ENCODE measurements at regions of chr6 and their contacts with region 1.

Region 1: DNA sequence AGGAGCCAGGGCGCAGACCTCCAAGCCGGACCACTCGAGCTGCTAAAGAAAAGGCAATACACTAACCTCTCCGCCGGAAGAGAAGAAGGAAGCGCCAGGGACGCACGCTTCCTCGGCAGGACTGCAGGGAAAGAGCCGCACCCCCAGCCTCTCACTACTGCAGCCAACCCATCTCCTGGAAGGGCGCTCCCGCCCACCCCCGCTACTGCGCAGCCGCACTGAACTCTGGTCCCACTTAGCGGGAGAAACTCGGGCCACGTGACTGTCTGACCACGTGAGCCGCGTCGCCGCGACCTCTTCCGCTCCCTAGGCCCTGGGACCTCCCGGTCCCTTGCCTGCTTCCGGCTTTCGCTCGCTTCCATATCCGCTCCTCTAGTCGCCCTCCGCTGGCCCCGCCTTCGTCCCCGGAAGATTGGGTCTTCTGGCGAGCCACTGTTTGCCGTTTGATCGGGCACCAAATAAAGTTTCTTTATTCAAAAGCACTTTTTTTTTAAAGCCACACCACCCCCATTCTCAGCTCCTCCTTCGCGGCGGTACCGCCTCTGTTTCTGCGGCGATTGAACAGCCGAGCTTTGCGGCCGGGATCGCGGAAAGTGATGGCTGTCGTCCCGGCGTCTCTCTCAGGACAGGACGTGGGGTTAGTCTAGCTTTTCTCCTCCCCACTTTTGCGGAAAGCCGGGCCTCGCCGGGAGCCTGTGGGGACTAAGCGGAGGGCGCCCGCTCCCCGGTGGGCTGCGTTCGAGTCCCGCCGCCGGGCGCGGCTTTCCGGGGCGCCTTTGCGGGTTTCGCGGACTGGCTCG is at the start of gene RMND1:
- DNase-seq: peak; percentile 96
- ATAC-seq: peak; percentile 96
- H3K4me3 Mint-ChIP-seq: peak within 1 kb of the TSS; percentile 97
- H3K27ac Mint-ChIP-seq: peak within 1 kb of the TSS; percentile 91
- H3K4me1 Mint-ChIP-seq: peaks cover 28% of the 10 kb centered on the region
- H3K27me3 Mint-ChIP-seq: no peaks in the 10 kb centered on the region
- CTCF ChIP-seq: no peak
- total RNA-seq, gene RMND1: 12.4 and 17.1 TPM in 2 replicates

Region 2: DNA sequence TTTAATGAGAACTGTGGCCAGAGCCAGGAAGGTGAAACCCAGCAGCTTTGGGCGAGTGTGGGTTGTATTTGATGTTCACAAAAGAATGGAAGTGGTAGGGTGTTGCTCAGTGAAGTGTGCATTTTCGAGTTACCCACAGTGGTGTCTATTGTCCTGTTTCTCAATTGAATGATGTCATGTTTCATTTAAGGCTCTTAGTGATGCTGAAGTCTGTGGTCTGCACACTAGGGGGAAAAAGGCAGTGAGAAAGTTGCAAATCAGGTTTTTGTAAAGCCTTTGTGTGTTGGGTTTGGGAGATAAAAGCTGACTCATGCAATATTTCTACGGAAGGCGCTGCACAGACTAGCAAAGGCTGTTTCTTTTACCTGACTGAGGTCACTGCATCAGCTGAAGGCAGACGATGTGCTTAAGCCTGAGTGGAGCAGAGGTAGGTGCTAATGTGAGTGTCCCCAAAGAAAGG is 731.3 kb before region 1 on chr6:
- CTCF ChIA-PET with region 1: no interaction called
- POLR2A ChIA-PET with region 1: interaction called, 10 read pairs
- intact Hi-C with region 1: no loop called
- DNase-seq: no peak
- ATAC-seq: peak; percentile 96
- H3K4me3 Mint-ChIP-seq: peak overlapping the region; percentile 25
- H3K27ac Mint-ChIP-seq: peak overlapping the region; percentile 80
- H3K4me1 Mint-ChIP-seq: peaks cover 74% of the 10 kb centered on the region
- H3K27me3 Mint-ChIP-seq: no peaks in the 10 kb centered on the region
- CTCF ChIP-seq: no peak

Region 3: DNA sequence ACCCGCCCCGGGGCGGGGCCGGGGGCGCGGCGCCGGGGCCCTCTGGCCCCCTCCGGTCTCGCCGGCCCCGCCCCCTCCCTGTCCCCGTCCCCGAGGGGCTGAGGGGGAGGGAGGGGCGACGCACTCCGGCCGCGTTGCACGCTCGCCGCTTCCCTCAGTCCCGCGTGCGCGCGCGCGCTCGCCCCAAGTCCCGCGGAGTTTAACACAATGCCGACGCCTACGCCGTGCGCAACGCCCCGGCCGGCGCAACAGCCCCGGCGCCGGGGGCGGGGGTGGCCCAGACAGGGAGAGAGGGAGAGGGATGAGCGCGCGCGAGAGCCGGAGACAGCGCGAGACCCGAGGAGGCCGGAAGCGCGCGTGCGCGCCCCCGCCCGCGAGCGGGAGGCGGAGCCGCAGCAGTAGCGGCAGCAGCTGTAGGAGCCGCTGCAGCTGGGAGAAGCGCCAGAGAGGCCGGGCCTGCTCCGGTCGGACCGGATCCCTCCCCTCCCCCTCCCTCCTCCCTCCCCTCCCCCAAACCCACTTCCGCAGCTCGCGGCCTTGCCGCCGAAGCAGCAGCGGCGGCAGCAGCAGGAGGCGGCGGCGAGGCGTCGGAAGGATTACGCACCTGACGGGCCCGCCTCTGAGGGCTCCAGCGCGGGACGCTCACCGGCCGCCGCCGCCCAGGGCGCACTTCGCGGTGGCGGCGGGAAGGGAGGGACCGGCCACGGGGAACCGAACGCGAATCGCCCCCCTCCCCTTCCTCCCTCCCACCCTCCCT is 61.7 kb before region 1 on chr6:
- CTCF ChIA-PET with region 1: no interaction called
- POLR2A ChIA-PET with region 1: interaction called, 38 read pairs
- intact Hi-C with region 1: loop called (anchors 1 kb)
- DNase-seq: peak; percentile 98
- ATAC-seq: peak; percentile 74
- H3K4me3 Mint-ChIP-seq: peak overlapping the region; percentile 91
- H3K27ac Mint-ChIP-seq: peak overlapping the region; percentile 75
- H3K4me1 Mint-ChIP-seq: peaks cover 53% of the 10 kb centered on the region
- H3K27me3 Mint-ChIP-seq: no peaks in the 10 kb centered on the region
- CTCF ChIP-seq: no peak

Region 4: DNA sequence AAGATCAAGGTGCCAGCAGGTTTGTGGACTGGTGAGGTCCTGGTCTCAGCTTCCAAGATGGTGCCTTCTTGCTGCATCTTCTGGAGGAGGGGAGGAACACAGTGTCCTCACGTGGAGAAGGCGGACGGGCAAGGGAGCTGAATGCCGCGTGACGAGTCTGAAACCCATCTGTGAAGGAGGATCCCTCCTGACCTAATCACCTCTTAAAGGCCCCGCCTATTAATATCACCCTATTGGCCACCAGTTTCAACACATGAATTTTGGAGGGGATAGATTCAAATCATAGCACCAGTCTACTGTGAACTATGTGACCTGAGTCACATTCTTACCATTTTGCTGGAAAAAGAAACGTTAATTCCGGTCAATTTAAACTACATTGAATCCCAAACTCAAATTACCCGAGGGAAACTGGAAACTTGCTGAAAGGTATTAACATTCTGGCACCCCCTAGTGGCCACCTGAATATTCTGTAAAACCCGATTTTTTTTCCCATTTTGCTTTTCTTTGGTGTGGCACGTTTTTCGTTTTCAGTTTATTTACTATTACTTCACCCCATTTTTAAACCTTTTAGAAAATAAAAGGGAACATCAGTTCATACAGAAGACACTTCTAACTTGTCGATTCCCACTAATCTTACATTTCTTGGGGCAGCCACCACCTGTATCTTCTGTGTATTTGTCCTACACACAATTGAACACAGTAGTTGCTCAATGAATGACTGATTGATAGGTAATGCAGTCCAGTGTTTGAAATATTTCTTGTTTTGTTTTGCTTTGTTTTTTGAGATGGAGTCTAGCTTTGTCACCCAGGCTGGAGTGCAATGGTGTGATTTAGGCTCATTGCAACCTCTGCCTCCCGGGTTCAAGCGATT is 23.7 kb after region 1 on chr6:
- CTCF ChIA-PET with region 1: interaction called, 5 read pairs
- POLR2A ChIA-PET with region 1: interaction called, 4 read pairs
- intact Hi-C with region 1: loop called (anchors 1 kb)
- DNase-seq: no peak
- ATAC-seq: peak; percentile 31
- H3K4me3 Mint-ChIP-seq: peak overlapping the region; percentile 44
- H3K27ac Mint-ChIP-seq: no peak overlapping the region
- H3K4me1 Mint-ChIP-seq: peaks cover 9% of the 10 kb centered on the region
- H3K27me3 Mint-ChIP-seq: no peaks in the 10 kb centered on the region
- CTCF ChIP-seq: peak; percentile 97

Region 5: GRCh38 chr6:151765444-151765886 is 313.3 kb after region 1 on chr6:
- CTCF ChIA-PET with region 1: no interaction called
- POLR2A ChIA-PET with region 1: no interaction called
- intact Hi-C with region 1: loop called (anchors 10 kb)
- DNase-seq: no peak
- ATAC-seq: peak; percentile 52
- H3K4me3 Mint-ChIP-seq: no peak overlapping the region
- H3K27ac Mint-ChIP-seq: no peak overlapping the region
- H3K4me1 Mint-ChIP-seq: peaks cover 26% of the 10 kb centered on the region
- H3K27me3 Mint-ChIP-seq: no peaks in the 10 kb centered on the region
- CTCF ChIP-seq: peak; percentile 26

Region 6: DNA sequence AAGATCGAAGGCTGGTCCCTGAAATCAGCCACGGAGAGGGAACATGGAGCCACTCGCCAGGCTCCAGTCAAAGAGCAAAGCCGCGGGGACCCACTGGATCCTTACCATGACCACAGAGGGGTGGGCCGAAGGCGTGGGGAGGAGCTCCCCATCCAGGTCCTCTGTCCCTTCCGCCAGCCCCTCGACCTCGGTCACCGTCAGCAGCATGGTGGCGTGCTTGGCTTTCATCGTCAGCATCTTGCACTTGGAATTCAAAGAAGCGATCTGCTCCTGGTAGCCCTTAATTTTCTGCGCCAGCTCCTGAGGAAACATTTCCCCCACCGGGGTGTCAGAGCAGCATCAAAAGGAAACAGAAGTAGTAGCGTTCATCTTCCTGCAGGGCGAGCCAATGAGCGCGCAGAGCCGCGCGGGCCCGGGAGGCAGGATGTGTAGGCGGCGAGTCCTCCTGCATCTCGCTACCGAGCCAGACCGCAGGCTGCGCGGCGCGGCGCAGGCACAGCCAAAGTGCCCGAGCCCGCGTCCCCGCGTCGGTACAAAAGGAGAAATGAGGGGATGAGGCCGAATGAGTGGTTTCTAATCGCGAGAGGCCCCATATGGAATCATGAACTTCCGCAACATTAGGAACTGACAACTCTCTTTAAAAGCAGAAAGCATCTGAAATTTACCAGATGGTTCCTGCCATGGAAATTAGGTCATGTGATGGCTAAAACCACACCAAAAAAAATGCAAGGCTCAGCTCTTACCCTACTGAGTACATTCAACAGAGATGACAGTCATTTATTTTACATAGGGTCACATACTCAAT is 849.8 kb after region 1 on chr6:
- CTCF ChIA-PET with region 1: no interaction called
- POLR2A ChIA-PET with region 1: interaction called, 3 read pairs
- intact Hi-C with region 1: loop called (anchors 1 kb)
- DNase-seq: peak; percentile 82
- ATAC-seq: peak; percentile 97
- H3K4me3 Mint-ChIP-seq: peak overlapping the region; percentile 100
- H3K27ac Mint-ChIP-seq: peak overlapping the region; percentile 100
- H3K4me1 Mint-ChIP-seq: peaks cover 40% of the 10 kb centered on the region
- H3K27me3 Mint-ChIP-seq: no peaks in the 10 kb centered on the region
- CTCF ChIP-seq: no peak

Region 7: DNA sequence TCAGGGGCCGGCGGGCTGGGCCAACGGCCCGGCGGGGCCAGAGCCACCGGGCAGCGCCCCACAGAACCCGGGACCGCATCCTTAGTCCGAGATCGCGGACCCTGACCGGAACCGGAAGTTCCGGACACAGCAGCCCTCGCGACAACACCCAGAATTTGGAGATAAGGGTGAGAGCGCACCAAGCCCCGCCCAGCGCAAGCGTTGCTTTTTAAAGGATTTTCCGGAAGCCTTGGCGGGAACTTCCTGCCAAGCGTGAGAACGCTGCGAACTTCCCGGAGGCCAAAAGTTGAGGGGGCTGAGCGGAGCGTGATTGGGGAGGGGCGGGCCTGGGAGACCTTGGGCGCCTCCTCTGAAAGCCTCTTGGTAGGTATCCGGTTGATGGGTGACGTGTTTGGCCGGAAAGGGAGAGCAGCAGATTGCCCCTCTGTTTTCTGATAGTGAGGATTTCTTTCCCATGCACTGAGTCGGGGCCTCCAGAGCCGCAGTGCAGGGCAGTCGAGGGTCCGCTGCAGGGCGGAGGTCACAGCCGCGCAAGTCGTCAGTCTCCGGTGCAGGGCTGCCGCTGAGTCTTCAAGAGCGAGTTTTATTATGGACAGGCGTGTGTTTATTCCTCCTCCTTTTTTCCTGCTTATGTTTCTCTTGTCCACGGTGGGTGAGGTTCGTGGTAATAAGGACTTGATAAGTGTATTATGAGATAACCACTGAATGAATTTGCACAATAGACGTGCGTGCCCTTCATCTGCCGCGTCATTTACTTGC is 1550.6 kb after region 1 on chr6 and contains the start of gene MTRF1L:
- CTCF ChIA-PET with region 1: no interaction called
- POLR2A ChIA-PET with region 1: no interaction called
- intact Hi-C with region 1: loop called (anchors 1 kb)
- DNase-seq: peak; percentile 77
- ATAC-seq: peak; percentile 85
- H3K4me3 Mint-ChIP-seq: peak within 1 kb of the TSS; percentile 99
- H3K27ac Mint-ChIP-seq: peak within 1 kb of the TSS; percentile 93
- H3K4me1 Mint-ChIP-seq: peaks cover 42% of the 10 kb centered on the region
- H3K27me3 Mint-ChIP-seq: no peaks in the 10 kb centered on the region
- CTCF ChIP-seq: no peak
- total RNA-seq, gene MTRF1L: 20.7 and 21.3 TPM in 2 replicates

Measured in activated B cell treated with CpG ODN at 0.5 μM for 24 hours (primary cell).